CD14-positive monocyte (primary cell): ENCODE measurements at regions of chr12 and their contacts with region 1.

Region 1: GRCh38 chr12:27014085-27014858 is at the start of gene TM7SF3:
- DNase-seq: peak; percentile 91 to 92 (median 92)
- H3K4me3 ChIP-seq: peak within 1 kb of the TSS; percentile 91 to 96 (median 94)
- H3K4me3 Mint-ChIP-seq: peak within 1 kb of the TSS; percentile 93 to 96
- H3K27ac ChIP-seq: peak within 1 kb of the TSS; percentile 73 to 92
- H3K27ac Mint-ChIP-seq: peak within 1 kb of the TSS; percentile 87 to 95 (median 93)
- H3K4me1 ChIP-seq: peaks cover 37 to 52% of the 10 kb centered on the region in 2 donors
- H3K4me1 Mint-ChIP-seq: peaks cover 62% of the 10 kb centered on the region
- H3K27me3 ChIP-seq: no peaks in the 10 kb centered on the region
- H3K27me3 Mint-ChIP-seq: peaks cover 0 to 2% (median 0%) of the 10 kb centered on the region in 3 donors
- CTCF ChIP-seq: peak; percentile 98
- polyA plus RNA-seq, gene TM7SF3: 36.3 to 85.9 (median 71.7) TPM

Region 2: GRCh38 chr12:26832822-26833742 is 181.2 kb before region 1 on chr12 and contains the start of gene ITPR2:
- intact Hi-C with region 1: loop called in 1 of 2 experiments (anchors 5 kb)
- DNase-seq: peak; percentile 82 to 90 (median 87)
- H3K4me3 ChIP-seq: peak within 1 kb of the TSS; percentile 72 to 87 (median 85)
- H3K4me3 Mint-ChIP-seq: peak within 1 kb of the TSS; percentile 96 to 99
- H3K27ac ChIP-seq: peak within 1 kb of the TSS; percentile 88 to 98
- H3K27ac Mint-ChIP-seq: peak within 1 kb of the TSS; percentile 97 to 100 (median 100)
- H3K4me1 ChIP-seq: peaks cover 18 to 29% of the 10 kb centered on the region in 2 donors
- H3K4me1 Mint-ChIP-seq: peaks cover 40% of the 10 kb centered on the region
- H3K27me3 ChIP-seq: no peaks in the 10 kb centered on the region
- H3K27me3 Mint-ChIP-seq: no peaks in the 10 kb centered on the region
- CTCF ChIP-seq: peak; percentile 44
- polyA plus RNA-seq, gene ITPR2: 2.7 to 6.4 (median 5.7) TPM

Region 3: DNA sequence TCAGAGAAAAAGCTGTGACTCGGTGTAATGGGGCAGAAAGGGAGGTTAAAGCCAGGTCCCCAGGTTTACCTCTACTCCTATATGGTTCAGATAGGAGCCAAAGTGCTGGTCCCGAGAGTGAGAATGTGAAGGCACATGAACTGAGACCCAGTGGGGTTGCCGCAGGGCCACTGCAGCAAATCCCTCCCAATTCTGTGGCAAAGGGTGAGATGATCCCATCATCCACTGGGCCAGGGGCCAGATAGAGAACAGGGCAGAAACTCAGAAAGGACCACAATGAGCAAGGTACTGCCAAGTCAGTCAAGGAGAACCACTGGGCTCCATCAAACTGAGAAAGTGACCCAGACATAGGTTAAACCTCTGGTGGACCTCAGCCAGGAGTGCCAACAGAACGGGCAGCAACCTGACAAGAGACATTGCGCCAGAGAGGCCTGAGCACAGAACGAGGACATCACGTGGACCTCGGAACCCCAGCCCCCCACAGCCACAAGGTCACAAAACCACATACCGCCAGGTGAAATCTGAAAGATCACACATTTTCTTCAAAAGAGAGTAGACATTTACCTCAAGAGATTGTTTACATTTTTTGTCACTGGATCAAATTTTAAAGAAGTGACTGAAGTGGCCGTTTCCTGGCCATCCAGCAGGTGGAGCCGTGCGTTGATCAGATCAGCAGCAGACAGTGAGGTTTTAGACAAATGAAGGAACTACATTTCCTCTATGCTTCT is 160.8 kb before region 1 on chr12:
- intact Hi-C with region 1: loop called in 1 of 2 experiments (anchors 5 kb)
- DNase-seq: peak; percentile 59 to 74 (median 66)
- H3K4me3 ChIP-seq: no peak overlapping the region
- H3K4me3 Mint-ChIP-seq: peak overlapping the region; percentile 54 to 80
- H3K27ac ChIP-seq: peak overlapping the region in 1 of 2 donors; percentile 17
- H3K27ac Mint-ChIP-seq: peak overlapping the region in 4 of 7 donors; percentile 20 to 87 (median 76)
- H3K4me1 ChIP-seq: peaks cover 7 to 8% of the 10 kb centered on the region in 2 donors
- H3K4me1 Mint-ChIP-seq: peaks cover 2% of the 10 kb centered on the region
- H3K27me3 ChIP-seq: no peaks in the 10 kb centered on the region
- H3K27me3 Mint-ChIP-seq: no peaks in the 10 kb centered on the region
- CTCF ChIP-seq: peak; percentile 85

Region 4: DNA sequence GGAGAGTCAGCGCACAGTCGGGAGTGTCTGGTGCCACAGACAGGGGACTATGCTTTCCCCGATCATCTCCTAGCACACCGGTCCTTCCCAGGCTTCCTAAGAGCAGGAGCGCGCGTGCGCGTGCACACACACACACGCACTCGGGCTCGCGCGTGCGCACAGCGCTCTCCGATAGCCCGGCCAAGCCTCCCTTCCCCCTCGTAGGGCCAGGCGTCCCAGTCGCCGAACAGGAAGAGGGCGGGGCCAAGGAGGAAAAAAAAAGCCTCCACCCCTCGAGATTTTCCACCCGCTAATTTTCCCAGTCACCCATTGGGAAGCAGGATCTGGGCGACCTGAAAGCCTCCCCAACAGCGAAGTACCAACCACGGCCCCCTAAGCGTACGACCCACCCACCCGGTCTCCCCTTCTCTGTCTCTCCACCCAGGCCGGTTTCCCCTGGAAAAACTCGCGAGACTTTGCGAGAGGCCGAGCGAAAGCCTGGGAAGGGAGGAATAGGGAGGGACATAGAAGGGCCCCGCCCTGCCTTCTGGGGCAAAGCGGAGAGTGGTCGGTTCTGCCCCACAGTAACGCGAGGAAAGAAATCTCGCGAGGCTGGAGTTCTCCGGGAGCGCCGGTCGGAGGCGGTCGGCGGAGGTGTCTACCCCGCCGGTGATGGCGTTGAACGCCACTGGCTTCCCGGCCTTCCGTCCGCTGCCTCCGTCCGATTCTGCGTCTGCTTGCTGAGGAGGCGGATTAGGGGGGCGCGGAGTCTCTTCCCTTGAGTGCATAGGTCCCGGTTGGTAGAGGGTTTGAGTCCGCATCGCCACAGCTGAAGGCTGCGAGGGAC is 76.2 kb before region 1 on chr12 and contains the starts of genes FGFR1OP2 and INTS13:
- intact Hi-C with region 1: loop called (anchors 2 to 5 kb)
- DNase-seq: peak; percentile 98 to 99 (median 98)
- H3K4me3 ChIP-seq: peak within 1 kb of the TSS; percentile 80 to 93 (median 90)
- H3K4me3 Mint-ChIP-seq: peak within 1 kb of the TSS; percentile 96 to 98
- H3K27ac ChIP-seq: peak within 1 kb of the TSS; percentile 92 to 93
- H3K27ac Mint-ChIP-seq: peak within 1 kb of the TSS; percentile 97 to 100 (median 100)
- H3K4me1 ChIP-seq: peaks cover 39 to 58% of the 10 kb centered on the region in 2 donors
- H3K4me1 Mint-ChIP-seq: peaks cover 57% of the 10 kb centered on the region
- H3K27me3 ChIP-seq: no peaks in the 10 kb centered on the region
- H3K27me3 Mint-ChIP-seq: peaks cover 0 to 2% (median 0%) of the 10 kb centered on the region in 3 donors
- CTCF ChIP-seq: no peak
- polyA plus RNA-seq, gene FGFR1OP2: 29.8 to 68.9 (median 66.4) TPM
- polyA plus RNA-seq, gene INTS13: 4.6 to 8.0 (median 7.5) TPM

Region 5: GRCh38 chr12:26963413-26963812 is 50.9 kb before region 1 on chr12:
- intact Hi-C with region 1: no loop called
- DNase-seq: peak in 2 of 3 donors; percentile 13 to 30
- H3K4me3 ChIP-seq: no peak overlapping the region
- H3K4me3 Mint-ChIP-seq: no peak overlapping the region
- H3K27ac ChIP-seq: peak overlapping the region in 1 of 2 donors; percentile 47
- H3K27ac Mint-ChIP-seq: peak overlapping the region in 5 of 7 donors; percentile 11 to 76 (median 45)
- H3K4me1 ChIP-seq: peaks cover 0 to 7% of the 10 kb centered on the region in 2 donors
- H3K4me1 Mint-ChIP-seq: peaks cover 3% of the 10 kb centered on the region
- H3K27me3 ChIP-seq: no peaks in the 10 kb centered on the region
- H3K27me3 Mint-ChIP-seq: no peaks in the 10 kb centered on the region
- CTCF ChIP-seq: no peak

Region 6: GRCh38 chr12:26995706-26996105 is 18.6 kb before region 1 on chr12:
- intact Hi-C with region 1: loop called in 1 of 2 experiments (anchors 2 kb)
- DNase-seq: no peak
- H3K4me3 ChIP-seq: no peak overlapping the region
- H3K4me3 Mint-ChIP-seq: no peak overlapping the region
- H3K27ac ChIP-seq: no peak overlapping the region
- H3K27ac Mint-ChIP-seq: no peak overlapping the region
- H3K4me1 ChIP-seq: peaks cover 25 to 29% of the 10 kb centered on the region in 2 donors
- H3K4me1 Mint-ChIP-seq: peaks cover 32% of the 10 kb centered on the region
- H3K27me3 ChIP-seq: no peaks in the 10 kb centered on the region
- H3K27me3 Mint-ChIP-seq: peaks cover 0 to 2% (median 0%) of the 10 kb centered on the region in 3 donors
- CTCF ChIP-seq: no peak

Region 7: DNA sequence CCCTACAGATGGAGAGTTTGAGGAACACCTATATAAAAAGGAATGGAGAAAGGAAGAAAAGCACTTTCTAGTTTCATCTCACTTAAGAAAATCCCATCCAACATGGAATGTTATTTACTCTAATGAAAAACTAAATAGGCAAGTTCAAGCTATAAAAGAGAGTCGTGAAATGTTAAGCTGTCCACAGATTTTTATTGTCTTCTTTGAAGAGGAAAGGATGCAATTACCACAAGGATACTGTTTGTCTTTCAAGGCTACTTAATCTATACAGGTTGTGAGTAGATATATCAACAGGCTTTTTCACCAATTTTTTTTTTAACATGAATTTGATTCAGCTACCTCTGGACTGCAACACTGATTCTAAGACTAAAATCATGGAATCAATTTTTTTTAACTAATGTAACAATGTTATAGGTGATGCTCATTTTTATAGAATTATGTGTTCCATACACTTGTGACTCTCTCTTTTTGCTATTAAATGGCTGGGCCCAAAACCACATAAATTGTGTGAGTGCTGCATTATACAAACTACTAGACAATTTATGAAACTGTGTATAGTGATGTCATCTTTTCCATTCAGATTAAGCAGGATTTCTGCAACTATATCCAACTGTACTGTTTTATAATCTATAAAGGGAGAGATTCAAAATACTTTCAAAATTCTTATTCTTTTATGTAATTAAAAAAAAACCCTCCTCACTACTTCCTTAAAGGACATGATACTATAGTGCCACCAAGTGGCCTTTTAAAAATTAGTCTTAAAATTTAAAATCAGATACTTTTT is 291.6 kb after region 1 on chr12:
- intact Hi-C with region 1: loop called (anchors 10 kb)
- DNase-seq: peak; percentile 21 to 47 (median 22)
- H3K4me3 ChIP-seq: no peak overlapping the region
- H3K4me3 Mint-ChIP-seq: no peak overlapping the region
- H3K27ac ChIP-seq: no peak overlapping the region
- H3K27ac Mint-ChIP-seq: no peak overlapping the region
- H3K4me1 ChIP-seq: no peaks in the 10 kb centered on the region
- H3K4me1 Mint-ChIP-seq: no peaks in the 10 kb centered on the region
- H3K27me3 ChIP-seq: no peaks in the 10 kb centered on the region
- H3K27me3 Mint-ChIP-seq: peaks cover 0 to 1% (median 0%) of the 10 kb centered on the region in 3 donors
- CTCF ChIP-seq: peak; percentile 81